Activated CD4-positive, alpha-beta memory T cell treated with anti-CD3 and anti-CD28 coated beads for 36 hours (primary cell): ENCODE measurements at regions of chr7 and their contacts with region 1.

Region 1: DNA sequence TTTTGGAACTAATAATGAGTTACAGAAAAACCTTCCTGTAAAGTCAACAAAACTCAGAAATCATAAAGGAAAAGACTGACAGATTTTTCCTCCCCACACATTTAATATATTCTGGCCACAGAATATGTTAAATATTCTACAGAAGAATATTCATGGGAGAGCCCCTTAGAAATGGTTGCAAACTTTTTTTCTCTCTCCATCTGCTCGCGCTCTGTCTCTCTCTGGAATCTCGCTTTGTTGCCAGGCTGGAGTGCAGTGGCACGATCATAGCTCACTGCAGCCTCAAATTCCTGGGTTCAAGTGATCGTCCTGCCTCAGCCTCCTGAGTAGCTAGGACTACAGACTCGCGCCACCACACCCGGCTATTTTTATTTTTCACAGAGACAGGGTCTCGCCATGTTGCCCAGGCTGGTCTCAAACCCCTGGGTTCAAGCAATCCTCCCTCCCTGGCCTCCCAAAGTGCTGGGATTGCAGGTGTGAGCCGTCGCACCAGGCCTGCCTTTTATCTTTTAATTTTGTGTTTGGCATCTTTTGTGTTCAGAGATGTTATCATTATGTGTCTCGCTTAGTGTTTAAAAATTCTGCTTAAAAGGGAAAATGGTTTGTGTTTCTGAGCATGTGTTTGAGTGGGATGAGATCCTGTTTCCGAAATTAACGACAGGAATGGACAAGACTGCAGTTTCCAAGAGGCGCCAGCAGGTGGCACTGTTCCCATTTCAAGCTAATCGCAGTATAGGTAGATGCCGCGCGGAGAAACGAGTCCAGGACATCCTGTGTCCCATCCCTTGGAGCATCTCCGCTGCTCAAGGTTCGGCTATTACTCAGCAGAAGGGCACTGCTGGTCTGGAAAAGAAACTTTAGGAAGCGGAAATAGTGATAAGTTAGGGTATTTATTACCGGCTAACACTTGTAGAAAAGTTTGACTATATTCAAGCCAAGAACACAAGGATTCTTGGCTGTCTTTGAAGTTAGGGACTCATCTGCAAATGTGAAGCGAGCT is 23.1 kb upstream of the ST7 start:
- DNase-seq: peak; percentile 84
- H3K4me3 Mint-ChIP-seq: no peak overlapping the region
- H3K27ac Mint-ChIP-seq: no peak overlapping the region
- H3K4me1 Mint-ChIP-seq: peaks cover 4% of the 10 kb centered on the region
- H3K27me3 Mint-ChIP-seq: peaks cover 3% of the 10 kb centered on the region

Region 2: DNA sequence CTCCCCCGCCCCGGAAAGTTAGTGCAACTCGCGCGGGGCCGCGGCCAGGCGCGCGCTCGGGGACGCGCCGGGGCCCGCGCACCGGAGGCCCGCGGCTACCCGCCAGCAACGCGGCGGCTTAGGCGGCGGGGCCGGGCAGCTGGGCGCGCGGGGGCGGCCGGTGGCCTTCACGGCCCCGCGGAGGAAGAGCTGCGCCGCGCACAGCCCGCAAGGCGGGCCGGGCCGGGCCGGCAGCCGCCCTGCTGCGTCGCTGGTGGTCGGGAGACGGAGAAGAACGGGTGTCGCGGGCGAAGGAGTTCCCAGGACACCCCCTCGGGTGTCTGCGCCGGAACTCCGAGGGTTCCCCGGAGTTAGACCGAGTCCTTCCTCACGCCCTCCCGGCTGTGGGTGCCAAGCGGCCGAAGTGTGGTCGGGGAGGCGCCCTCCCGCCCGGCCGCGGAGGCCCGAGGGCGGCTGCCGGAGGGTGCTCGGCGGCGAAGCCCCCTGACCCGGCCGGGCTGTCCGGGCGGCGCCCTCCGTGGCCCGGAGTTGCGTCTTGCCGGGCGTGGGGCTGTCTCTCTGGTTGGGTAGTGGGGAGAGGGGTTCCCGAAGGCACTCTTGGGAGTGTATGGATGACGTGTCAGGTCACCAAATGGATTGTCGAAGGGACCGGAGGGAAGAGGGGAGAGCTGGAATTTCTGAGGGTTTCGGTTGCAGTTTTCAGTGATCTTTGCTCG is 23.7 kb after region 1 on chr7:
- CTCF ChIA-PET with region 1: interaction called, 4 read pairs
- POLR2A ChIA-PET with region 1: no interaction called
- intact Hi-C with region 1: loop called (anchors 1 kb)
- DNase-seq: peak; percentile 31
- H3K4me3 Mint-ChIP-seq: peak overlapping the region; percentile 92
- H3K27ac Mint-ChIP-seq: peak overlapping the region; percentile 87
- H3K4me1 Mint-ChIP-seq: peaks cover 24% of the 10 kb centered on the region
- H3K27me3 Mint-ChIP-seq: no peaks in the 10 kb centered on the region

Region 3: DNA sequence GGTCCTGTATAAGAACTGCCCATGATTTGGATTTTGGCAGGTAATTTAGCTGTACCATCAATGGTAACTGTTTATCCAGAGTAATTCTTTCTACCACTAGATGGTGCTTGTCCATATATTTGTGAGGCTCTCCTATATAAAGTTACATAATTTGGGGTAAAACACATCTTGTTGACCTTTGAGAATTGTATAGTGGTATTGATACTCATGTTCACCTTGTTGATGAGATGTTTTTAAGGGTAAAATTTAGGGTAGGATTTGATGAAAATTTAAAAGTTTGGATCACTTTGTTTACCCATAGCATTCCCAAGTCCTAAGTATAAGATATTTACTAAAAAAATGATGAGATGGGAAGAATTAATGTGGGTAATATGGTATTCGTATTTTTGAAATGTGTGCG is 54.7 kb after region 1 on chr7:
- CTCF ChIA-PET with region 1: interaction called, 18 read pairs
- POLR2A ChIA-PET with region 1: no interaction called
- intact Hi-C with region 1: loop called (anchors 1 kb)
- DNase-seq: no peak
- H3K4me3 Mint-ChIP-seq: no peak overlapping the region
- H3K27ac Mint-ChIP-seq: no peak overlapping the region
- H3K4me1 Mint-ChIP-seq: peaks cover 4% of the 10 kb centered on the region
- H3K27me3 Mint-ChIP-seq: no peaks in the 10 kb centered on the region

Region 4: GRCh38 chr7:117004899-117005298 is 74.7 kb after region 1 on chr7:
- CTCF ChIA-PET with region 1: no interaction called
- POLR2A ChIA-PET with region 1: no interaction called
- intact Hi-C with region 1: no loop called
- DNase-seq: no peak
- H3K4me3 Mint-ChIP-seq: no peak overlapping the region
- H3K27ac Mint-ChIP-seq: no peak overlapping the region
- H3K4me1 Mint-ChIP-seq: peaks cover 39% of the 10 kb centered on the region
- H3K27me3 Mint-ChIP-seq: peaks cover 7% of the 10 kb centered on the region

Region 5: GRCh38 chr7:117119192-117119924 is 189.1 kb after region 1 on chr7:
- CTCF ChIA-PET with region 1: interaction called, 77 read pairs
- POLR2A ChIA-PET with region 1: no interaction called
- intact Hi-C with region 1: loop called (anchors 1 kb)
- DNase-seq: peak; percentile 80
- H3K4me3 Mint-ChIP-seq: no peak overlapping the region
- H3K27ac Mint-ChIP-seq: no peak overlapping the region
- H3K4me1 Mint-ChIP-seq: peaks cover 1% of the 10 kb centered on the region
- H3K27me3 Mint-ChIP-seq: no peaks in the 10 kb centered on the region